Aorta (tissue), 5 donors: ENCODE measurements at regions of chr7 and their contacts with region 1.

Region 1: GRCh38 chr7:95916573-95917297 is 144.4 kb downstream of the DYNC1I1 start:
- DNase-seq: peak; percentile 76 to 92
- ATAC-seq: peak; percentile 83
- H3K4me3 ChIP-seq: peak overlapping the region in 1 of 2 donors; percentile 54
- H3K27ac ChIP-seq: no peak overlapping the region
- H3K4me1 ChIP-seq: no peaks in the 10 kb centered on the region
- H3K27me3 ChIP-seq: no peaks in the 10 kb centered on the region

Region 2: DNA sequence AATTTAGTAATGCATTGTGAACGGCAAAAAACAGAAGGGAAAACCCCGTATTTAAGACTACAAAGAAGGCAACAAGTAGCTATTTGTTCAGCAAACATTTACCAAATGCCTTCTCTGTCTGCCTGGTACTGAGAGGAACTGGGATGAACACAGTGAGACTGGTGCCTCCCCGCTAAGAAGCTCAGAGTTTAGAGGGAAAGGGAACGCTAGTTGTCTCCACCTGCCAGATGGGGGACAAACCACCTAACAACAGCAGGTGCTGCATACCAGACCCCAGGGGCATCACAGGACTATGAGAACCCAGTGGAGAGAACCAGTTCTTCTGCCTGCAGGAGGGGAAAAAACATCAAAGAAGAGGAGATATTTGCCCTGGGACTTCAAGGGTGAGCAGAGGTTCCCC is 258.1 kb after region 1 on chr7:
- intact Hi-C with region 1: loop called in 1 of 2 experiments (anchors 5 kb)
- DNase-seq: no peak
- ATAC-seq: no peak
- H3K4me3 ChIP-seq: no peak overlapping the region
- H3K27ac ChIP-seq: no peak overlapping the region
- H3K4me1 ChIP-seq: peaks cover 0 to under 1% of the 10 kb centered on the region in 2 donors
- H3K27me3 ChIP-seq: no peaks in the 10 kb centered on the region

Region 3: GRCh38 chr7:96380111-96380512 is 463.4 kb after region 1 on chr7:
- intact Hi-C with region 1: no loop called
- DNase-seq: no peak
- ATAC-seq: no peak
- H3K4me3 ChIP-seq: no peak overlapping the region
- H3K27ac ChIP-seq: no peak overlapping the region
- H3K4me1 ChIP-seq: no peaks in the 10 kb centered on the region
- H3K27me3 ChIP-seq: no peaks in the 10 kb centered on the region

Region 4: DNA sequence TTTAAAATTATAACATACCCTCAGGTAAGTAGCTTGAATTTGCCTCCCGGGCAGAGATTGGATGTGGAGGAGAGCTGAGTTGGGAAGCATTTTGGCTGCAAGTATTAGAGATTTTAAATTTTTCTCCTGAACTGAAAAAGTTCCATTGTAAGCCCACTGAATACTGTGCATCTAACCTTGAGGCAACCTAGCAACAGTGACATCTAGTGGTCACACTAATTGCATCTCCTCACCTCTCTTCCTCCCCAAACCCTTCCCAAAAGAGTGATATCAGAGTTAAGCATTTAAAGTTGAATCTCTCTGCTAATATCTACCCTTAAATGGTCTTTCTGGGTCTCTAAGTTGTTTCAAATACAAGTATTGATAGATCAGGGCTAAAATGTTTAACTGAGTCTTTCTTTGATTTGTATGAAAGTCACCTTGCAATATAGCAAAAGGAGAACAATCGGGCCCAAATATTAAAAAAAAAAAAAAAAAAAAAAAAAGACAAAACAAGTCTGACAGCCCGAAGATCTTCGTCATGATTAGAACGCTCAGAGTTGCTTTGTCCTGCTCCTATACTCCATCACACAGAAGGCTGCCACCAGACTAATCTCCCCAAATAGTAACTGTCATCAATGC is 1148.3 kb after region 1 on chr7:
- intact Hi-C with region 1: loop called (anchors 5 kb)
- DNase-seq: no peak
- ATAC-seq: peak; percentile 77
- H3K4me3 ChIP-seq: no peak overlapping the region
- H3K27ac ChIP-seq: no peak overlapping the region
- H3K4me1 ChIP-seq: no peaks in the 10 kb centered on the region
- H3K27me3 ChIP-seq: no peaks in the 10 kb centered on the region